Astrocyte of the cerebellum (primary cell): ENCODE measurements at regions of chr15 and their contacts with region 1.

Region 1: GRCh38 chr15:30903497-30904201 is at the start of gene FAN1:
- DNase-seq: peak; percentile 43
- H3K4me3 ChIP-seq: peak within 1 kb of the TSS; percentile 68
- CTCF ChIP-seq: no peak

Region 2: DNA sequence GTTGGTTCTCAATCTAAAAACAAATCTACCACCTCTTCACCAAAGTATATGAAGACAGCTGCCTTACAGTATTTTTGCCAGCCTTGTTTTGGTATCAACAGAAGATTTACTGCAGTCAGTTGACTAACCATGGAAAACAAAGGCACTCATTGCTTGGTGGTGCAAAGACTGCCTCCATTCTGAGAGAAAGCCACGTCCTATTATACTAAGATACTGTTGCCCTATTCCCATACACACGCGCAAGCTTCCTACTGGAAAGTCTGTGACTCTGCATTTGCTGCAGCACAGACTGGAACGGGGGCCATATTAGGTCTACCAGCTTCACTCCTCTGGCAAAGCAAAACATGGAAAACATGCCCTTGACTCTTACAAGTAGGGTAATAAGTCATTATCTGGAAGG is 69.7 kb after region 1 on chr15:
- in situ Hi-C with region 1: loop called (anchors 5 kb)
- DNase-seq: no peak
- H3K4me3 ChIP-seq: no peak overlapping the region
- CTCF ChIP-seq: no peak